Activated CD4-positive, alpha-beta T cell treated with anti-CD3 and anti-CD28 coated beads for 36 hours (primary cell): ENCODE measurements at regions of chr1 and their contacts with region 1.

Region 1: GRCh38 chr1:229661022-229661877 is 35.2 kb downstream of the URB2 start:
- DNase-seq: peak; percentile 88
- ATAC-seq: peak; percentile 64
- H3K4me3 Mint-ChIP-seq: no peak overlapping the region
- H3K27ac Mint-ChIP-seq: no peak overlapping the region
- H3K4me1 Mint-ChIP-seq: peaks cover 25% of the 10 kb centered on the region
- H3K27me3 Mint-ChIP-seq: no peaks in the 10 kb centered on the region

Region 2: DNA sequence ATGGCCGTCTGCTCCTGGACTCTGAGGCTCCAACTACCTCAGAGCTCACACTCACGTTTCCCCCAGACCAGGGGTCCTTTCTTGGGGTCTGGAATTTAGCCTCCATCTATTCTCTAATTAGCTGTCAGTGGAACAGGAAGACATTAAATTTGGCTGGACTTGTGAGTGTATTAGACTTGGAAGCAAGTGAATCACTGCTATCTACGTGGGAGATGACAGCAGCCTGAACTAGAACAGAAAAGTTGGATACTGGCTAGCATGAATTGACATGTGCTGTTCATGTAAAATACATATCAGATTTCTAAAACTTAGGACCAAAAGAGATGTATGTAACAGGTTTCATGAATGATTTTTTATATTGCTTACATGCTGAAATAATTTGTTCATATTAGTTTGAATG is 63.4 kb before region 1 on chr1:
- CTCF ChIA-PET with region 1: no interaction called
- POLR2A ChIA-PET with region 1: no interaction called
- intact Hi-C with region 1: no loop called
- DNase-seq: no peak
- ATAC-seq: no peak
- H3K4me3 Mint-ChIP-seq: no peak overlapping the region
- H3K27ac Mint-ChIP-seq: no peak overlapping the region
- H3K4me1 Mint-ChIP-seq: peaks cover 16% of the 10 kb centered on the region
- H3K27me3 Mint-ChIP-seq: no peaks in the 10 kb centered on the region

Region 3: DNA sequence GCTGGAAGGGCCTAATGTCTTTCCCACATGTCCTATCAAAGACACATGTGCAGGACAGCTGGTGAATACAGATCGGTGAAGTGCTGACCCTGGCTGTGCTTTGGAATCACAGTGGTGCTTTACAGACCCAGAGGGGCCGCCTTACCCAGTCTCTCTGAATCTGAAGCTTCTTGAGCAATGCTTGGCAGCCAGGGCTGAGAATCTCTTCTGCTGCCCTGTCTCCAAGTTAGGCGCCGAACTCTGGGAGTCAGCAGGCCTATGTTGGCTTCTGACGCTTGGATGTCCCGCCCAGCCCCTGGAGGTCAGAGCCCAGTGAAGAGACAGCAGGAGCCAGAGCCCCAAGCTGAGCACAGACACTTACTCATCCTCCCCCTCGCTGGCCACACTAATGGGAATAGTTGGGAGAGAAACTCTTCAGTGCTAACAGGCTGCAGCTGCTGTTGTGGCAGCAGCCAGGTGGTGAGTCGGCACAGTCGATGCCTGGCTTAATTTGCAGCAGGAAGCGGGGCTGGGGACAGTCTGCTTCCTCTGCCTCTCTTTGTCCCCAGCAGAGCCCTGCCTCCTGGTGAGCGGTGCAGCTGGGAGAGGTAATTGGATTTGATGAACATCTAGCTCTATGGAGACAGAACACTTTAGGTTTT is 32.9 kb after region 1 on chr1:
- CTCF ChIA-PET with region 1: interaction called, 3 read pairs
- POLR2A ChIA-PET with region 1: no interaction called
- intact Hi-C with region 1: loop called in 1 of 2 experiments (anchors 1 kb)
- DNase-seq: no peak
- ATAC-seq: no peak
- H3K4me3 Mint-ChIP-seq: no peak overlapping the region
- H3K27ac Mint-ChIP-seq: no peak overlapping the region
- H3K4me1 Mint-ChIP-seq: peaks cover 27% of the 10 kb centered on the region
- H3K27me3 Mint-ChIP-seq: peaks cover 9% of the 10 kb centered on the region

Region 4: DNA sequence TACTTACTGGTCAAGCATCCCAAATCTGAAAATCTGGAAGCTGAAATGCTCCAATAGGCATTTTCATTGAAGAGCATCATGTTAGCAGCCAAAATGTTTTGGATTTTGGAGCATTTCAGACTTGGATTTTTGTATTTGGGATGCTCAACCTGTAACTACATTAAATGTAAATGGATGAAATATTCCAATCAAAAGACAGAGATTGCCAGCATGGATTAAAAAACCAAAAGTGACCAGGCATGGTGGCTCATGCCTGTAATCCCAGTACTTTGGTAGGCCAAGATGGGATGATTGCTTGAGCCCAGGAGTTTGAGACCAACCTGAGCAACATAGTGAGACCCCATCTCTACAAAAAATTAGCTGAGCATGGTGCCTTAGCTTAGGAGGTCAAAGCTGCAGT is 75.1 kb after region 1 on chr1:
- CTCF ChIA-PET with region 1: interaction called, 3 read pairs
- POLR2A ChIA-PET with region 1: interaction called, 4 read pairs
- intact Hi-C with region 1: loop called in 1 of 2 experiments (anchors 2 kb)
- DNase-seq: no peak
- ATAC-seq: no peak
- H3K4me3 Mint-ChIP-seq: no peak overlapping the region
- H3K27ac Mint-ChIP-seq: no peak overlapping the region
- H3K4me1 Mint-ChIP-seq: peaks cover 17% of the 10 kb centered on the region
- H3K27me3 Mint-ChIP-seq: peaks cover 4% of the 10 kb centered on the region

Region 5: GRCh38 chr1:229856009-229856650 is 194.9 kb after region 1 on chr1:
- CTCF ChIA-PET with region 1: no interaction called
- POLR2A ChIA-PET with region 1: no interaction called
- intact Hi-C with region 1: loop called in 1 of 2 experiments (anchors 10 kb)
- DNase-seq: peak; percentile 36
- ATAC-seq: peak; percentile 78
- H3K4me3 Mint-ChIP-seq: peak overlapping the region; percentile 59
- H3K27ac Mint-ChIP-seq: no peak overlapping the region
- H3K4me1 Mint-ChIP-seq: peaks cover 12% of the 10 kb centered on the region
- H3K27me3 Mint-ChIP-seq: no peaks in the 10 kb centered on the region

Region 6: GRCh38 chr1:230109895-230110667 is 448.8 kb after region 1 on chr1:
- CTCF ChIA-PET with region 1: no interaction called
- POLR2A ChIA-PET with region 1: no interaction called
- intact Hi-C with region 1: loop called (anchors 1 to 10 kb)
- DNase-seq: peak; percentile 94
- ATAC-seq: peak; percentile 91
- H3K4me3 Mint-ChIP-seq: peak overlapping the region; percentile 48
- H3K27ac Mint-ChIP-seq: peak overlapping the region; percentile 94
- H3K4me1 Mint-ChIP-seq: peaks cover 88% of the 10 kb centered on the region
- H3K27me3 Mint-ChIP-seq: no peaks in the 10 kb centered on the region

Region 7: GRCh38 chr1:230310381-230311163 is 649.3 kb after region 1 on chr1:
- CTCF ChIA-PET with region 1: interaction called, 9 read pairs
- POLR2A ChIA-PET with region 1: no interaction called
- intact Hi-C with region 1: loop called (anchors 1 kb)
- DNase-seq: peak; percentile 82
- ATAC-seq: peak; percentile 48
- H3K4me3 Mint-ChIP-seq: no peak overlapping the region
- H3K27ac Mint-ChIP-seq: no peak overlapping the region
- H3K4me1 Mint-ChIP-seq: peaks cover 15% of the 10 kb centered on the region
- H3K27me3 Mint-ChIP-seq: peaks cover 4% of the 10 kb centered on the region